A673 (cell line): ENCODE measurements at regions of chr1 and their contacts with region 1.

Region 1: GRCh38 chr1:235610157-235610556 is 39.4 kb downstream of the GNG4 start:
- DNase-seq: no peak
- H3K4me3 ChIP-seq: no peak overlapping the region
- H3K27ac ChIP-seq: no peak overlapping the region
- H3K4me1 ChIP-seq: no peaks in the 10 kb centered on the region
- H3K27me3 ChIP-seq: no peaks in the 10 kb centered on the region
- CTCF ChIP-seq: no peak

Region 2: GRCh38 chr1:235583511-235584001 is 26.6 kb before region 1 on chr1:
- CTCF ChIA-PET with region 1: no interaction called
- POLR2A ChIA-PET with region 1: no interaction called
- intact Hi-C with region 1: no loop called
- DNase-seq: no peak
- H3K4me3 ChIP-seq: no peak overlapping the region
- H3K27ac ChIP-seq: no peak overlapping the region
- H3K4me1 ChIP-seq: no peaks in the 10 kb centered on the region
- H3K27me3 ChIP-seq: no peaks in the 10 kb centered on the region
- CTCF ChIP-seq: peak; percentile 25

Region 3: DNA sequence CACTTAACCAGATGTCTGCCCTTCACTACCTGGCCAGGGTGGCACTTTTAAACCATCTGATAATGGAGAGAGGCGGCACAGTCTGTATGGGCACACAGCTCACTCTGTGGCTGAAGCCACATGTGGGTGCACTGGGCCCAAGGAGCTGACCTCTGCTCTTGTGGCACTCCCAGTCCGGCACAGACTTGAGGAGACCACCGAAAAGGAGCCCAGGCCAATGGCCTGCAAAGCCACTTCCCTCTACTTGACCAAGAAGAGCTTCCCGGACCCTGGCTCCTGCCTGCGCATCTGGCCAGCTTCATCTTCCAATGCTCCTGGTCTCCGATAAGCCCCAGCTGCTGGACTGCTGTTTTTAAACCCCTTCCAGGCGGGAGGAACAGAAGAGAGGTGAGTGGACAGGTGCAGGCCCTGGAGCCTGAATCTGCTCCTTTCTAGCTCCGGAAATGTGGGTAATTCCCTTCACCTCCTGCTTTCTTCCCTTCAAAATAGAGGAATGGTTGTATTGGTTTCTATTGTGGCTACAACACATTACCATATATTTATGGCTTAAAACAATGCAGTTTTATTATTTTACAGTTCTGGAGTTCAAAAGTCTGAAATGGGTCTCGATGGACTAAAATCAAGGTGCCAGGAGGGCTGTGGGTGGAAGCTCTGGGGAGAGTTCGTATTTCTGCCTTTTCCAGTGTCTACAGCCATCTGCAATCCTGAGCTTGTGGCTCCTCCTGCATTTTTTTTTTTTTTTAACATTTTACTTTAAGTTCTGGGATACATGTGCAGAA is 27.8 kb after region 1 on chr1:
- CTCF ChIA-PET with region 1: no interaction called
- POLR2A ChIA-PET with region 1: interaction called, 12 read pairs
- intact Hi-C with region 1: no loop called
- DNase-seq: no peak
- H3K4me3 ChIP-seq: no peak overlapping the region
- H3K27ac ChIP-seq: no peak overlapping the region
- H3K4me1 ChIP-seq: peaks cover 2% of the 10 kb centered on the region
- H3K27me3 ChIP-seq: no peaks in the 10 kb centered on the region
- CTCF ChIP-seq: no peak

Region 4: GRCh38 chr1:235745503-235746136 is 135.5 kb after region 1 on chr1:
- CTCF ChIA-PET with region 1: no interaction called
- POLR2A ChIA-PET with region 1: no interaction called
- intact Hi-C with region 1: no loop called
- DNase-seq: no peak
- H3K4me3 ChIP-seq: no peak overlapping the region
- H3K27ac ChIP-seq: no peak overlapping the region
- H3K4me1 ChIP-seq: no peaks in the 10 kb centered on the region
- H3K27me3 ChIP-seq: no peaks in the 10 kb centered on the region
- CTCF ChIP-seq: no peak